BJ (cell line): ENCODE measurements at regions of chr11 and their contacts with region 1.

Region 1: DNA sequence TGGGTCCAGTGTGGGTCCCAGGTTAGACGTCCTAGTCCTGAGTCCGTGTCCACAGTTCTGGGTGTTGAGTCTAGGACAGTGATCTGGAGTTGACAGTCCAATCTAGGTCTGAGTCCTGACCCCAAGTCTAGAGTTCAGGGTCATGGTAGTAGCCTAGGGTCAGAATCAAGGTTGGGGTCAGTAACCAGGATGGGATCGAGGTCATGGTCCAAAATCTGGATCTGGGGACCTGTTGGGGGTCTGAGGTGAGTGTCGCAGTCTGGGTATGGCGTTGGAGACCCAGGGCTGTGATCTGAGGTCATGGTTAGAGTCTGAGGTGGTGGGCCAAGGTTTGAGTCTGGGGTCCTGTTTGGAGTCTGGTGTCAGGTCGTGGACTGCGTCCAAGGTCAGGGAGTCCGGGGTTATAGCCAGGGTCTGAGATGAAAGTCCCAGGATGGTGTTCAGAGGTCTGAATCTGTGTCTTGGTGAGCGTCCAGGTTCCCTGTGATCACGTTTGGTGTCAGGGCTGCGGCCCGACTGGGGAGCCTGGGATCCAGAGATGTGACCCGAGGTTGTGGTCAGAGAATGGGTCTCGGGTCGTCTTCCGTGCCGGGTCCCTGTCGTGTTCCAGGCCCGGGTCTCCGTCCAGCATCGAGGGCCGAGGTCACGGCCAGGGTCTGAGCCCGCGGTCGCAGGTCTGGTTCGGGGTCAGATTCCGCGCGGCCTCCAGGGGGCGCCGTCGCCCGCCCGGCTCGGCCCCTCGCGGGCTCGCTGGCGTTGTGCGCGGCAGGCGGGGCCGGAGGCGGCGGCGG is 445 bp upstream of the GRK2 start:
- DNase-seq: no peak
- H3K4me3 ChIP-seq: peak overlapping the region; percentile 32
- H3K27me3 ChIP-seq: no peaks in the 10 kb centered on the region
- CTCF ChIP-seq: peak; percentile 65

Region 2: DNA sequence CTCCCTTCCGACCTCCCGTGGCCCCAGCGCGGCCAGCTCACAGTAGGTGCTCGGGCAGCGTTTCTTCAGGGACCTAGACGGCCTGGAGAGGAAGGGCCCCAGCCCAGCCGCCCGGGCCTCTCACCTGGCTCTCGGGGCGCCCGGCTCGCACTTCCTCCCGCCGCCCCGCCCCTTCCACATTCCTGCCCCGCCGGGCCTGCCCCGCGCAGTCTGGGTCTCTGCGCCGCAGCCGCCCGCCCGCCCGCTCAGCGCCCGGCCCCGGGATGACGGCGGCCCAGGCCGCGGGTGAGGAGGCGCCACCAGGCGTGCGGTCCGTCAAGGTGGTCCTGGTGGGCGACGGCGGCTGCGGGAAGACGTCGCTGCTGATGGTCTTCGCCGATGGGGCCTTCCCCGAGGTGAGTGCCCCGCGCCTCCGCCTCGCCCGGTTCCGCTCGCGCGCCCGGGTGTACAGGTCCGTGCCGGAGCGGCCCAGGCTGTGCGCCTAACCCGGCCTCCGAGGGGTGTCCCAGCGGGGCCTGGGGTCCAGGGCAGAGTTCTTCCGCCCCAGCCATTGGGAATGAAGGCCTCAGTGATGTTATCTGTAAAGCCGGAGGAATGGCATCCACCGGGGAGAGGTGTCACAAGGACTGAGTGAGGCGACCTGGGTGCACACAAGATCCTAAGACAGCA is 209.1 kb before region 1 on chr11 and contains the start of gene RHOD:
- CTCF ChIA-PET with region 1: no interaction called
- POLR2A ChIA-PET with region 1: no interaction called
- DNase-seq: no peak
- H3K4me3 ChIP-seq: peak within 1 kb of the TSS; percentile 72
- H3K27me3 ChIP-seq: no peaks in the 10 kb centered on the region
- CTCF ChIP-seq: no peak
- polyA plus RNA-seq, gene RHOD: 33.7 and 42.8 TPM in 2 replicates

Region 3: GRCh38 chr11:67202045-67202444 is 63.8 kb before region 1 on chr11:
- CTCF ChIA-PET with region 1: no interaction called
- POLR2A ChIA-PET with region 1: no interaction called
- DNase-seq: no peak
- H3K4me3 ChIP-seq: no peak overlapping the region
- H3K27me3 ChIP-seq: no peaks in the 10 kb centered on the region
- CTCF ChIP-seq: no peak

Region 4: GRCh38 chr11:67239783-67240575 is 25.8 kb before region 1 on chr11:
- CTCF ChIA-PET with region 1: interaction called, 15 read pairs
- POLR2A ChIA-PET with region 1: no interaction called
- DNase-seq: peak; percentile 96
- H3K4me3 ChIP-seq: peak overlapping the region; percentile 54
- H3K27me3 ChIP-seq: no peaks in the 10 kb centered on the region
- CTCF ChIP-seq: peak; percentile 36; the same call in 1 of the 2 replicates

Region 5: DNA sequence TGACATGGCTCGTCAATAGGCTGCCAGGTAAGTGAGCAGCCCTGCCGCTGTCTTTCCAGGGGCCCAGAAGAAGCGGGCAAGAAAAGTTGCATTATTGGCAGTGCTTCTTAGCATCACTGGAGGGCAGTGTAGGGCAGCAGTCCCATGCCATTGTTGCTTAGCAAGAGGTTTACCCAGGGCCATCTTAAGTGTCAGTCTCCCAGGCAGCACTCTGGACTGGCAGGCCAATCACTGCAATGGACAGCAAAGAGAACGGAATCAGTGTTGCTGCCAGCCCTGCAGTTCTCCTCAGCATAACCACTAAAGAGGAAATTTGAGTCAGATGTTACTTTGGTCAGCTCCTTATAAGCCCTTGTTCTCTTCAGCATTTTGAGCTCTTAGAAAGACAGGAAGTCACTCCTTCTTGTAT is 13.0 kb before region 1 on chr11:
- CTCF ChIA-PET with region 1: interaction called, 36 read pairs
- POLR2A ChIA-PET with region 1: no interaction called
- DNase-seq: no peak
- H3K4me3 ChIP-seq: no peak overlapping the region
- H3K27me3 ChIP-seq: no peaks in the 10 kb centered on the region
- CTCF ChIP-seq: peak; percentile 38; the same call in 1 of the 2 replicates

Region 6: DNA sequence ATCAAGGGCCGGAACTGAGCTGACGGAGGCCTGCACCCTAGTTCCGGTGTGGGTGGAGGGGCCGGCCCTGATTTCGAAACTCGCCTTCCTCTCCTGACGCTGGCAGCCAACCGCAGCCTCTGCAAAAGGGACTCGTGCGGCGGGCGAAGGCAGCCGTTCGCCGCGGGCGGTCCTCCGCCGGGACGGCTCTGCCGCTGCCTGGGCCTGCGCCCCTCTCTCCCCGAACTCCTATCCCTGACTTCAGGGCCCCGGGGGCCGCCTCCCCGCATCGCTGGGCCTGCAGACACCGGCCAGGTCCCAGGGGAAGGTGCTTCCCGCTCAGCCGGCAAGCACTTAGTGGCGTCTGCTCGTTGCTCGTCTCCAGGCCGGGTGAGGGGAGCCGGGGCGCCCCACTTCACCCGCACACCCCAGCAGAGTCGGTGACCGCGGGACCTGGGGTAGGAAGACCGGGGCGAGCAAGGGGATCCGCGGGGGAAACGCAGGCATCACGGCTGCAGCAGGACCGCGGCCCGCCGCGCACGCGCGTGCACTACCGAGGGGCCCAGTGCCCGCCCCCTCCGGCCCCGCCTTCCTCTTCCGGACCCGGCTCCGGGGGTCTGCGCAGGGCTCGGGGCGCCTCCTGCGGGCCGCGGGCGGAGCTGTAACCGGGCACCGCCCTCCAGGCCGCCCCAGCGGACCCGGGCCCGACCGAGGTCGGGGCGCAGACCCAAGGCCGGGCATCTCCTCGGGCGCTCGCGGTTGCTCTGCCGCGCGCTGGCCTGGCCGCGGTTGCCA is 22.8 kb after region 1 on chr11:
- CTCF ChIA-PET with region 1: interaction called, 12 read pairs
- POLR2A ChIA-PET with region 1: no interaction called
- DNase-seq: no peak
- H3K4me3 ChIP-seq: peak overlapping the region; percentile 94
- H3K27me3 ChIP-seq: no peaks in the 10 kb centered on the region
- CTCF ChIP-seq: no peak

Region 7: GRCh38 chr11:67373925-67374618 is 108.2 kb after region 1 on chr11:
- CTCF ChIA-PET with region 1: interaction called, 49 read pairs
- POLR2A ChIA-PET with region 1: no interaction called
- DNase-seq: peak; percentile 89
- H3K4me3 ChIP-seq: peak overlapping the region; percentile 72
- H3K27me3 ChIP-seq: no peaks in the 10 kb centered on the region
- CTCF ChIP-seq: peak; percentile 45

Region 8: GRCh38 chr11:67382276-67383136 is 116.7 kb after region 1 on chr11:
- CTCF ChIA-PET with region 1: interaction called, 49 read pairs
- POLR2A ChIA-PET with region 1: no interaction called
- DNase-seq: no peak
- H3K4me3 ChIP-seq: no peak overlapping the region
- H3K27me3 ChIP-seq: no peaks in the 10 kb centered on the region; the same call in 1 of the 2 replicates
- CTCF ChIP-seq: peak; percentile 99